SK-N-SH (cell line): ENCODE measurements at regions of chr3 and their contacts with region 1.

Region 1: GRCh38 chr3:132034486-132035464 is at the start of gene CPNE4:
- DNase-seq: peak; percentile 93
- H3K4me3 ChIP-seq: peak within 1 kb of the TSS; percentile 45 to 64
- H3K27ac ChIP-seq: no peak within 1 kb of the TSS
- H3K4me1 ChIP-seq: peaks cover 0 to 8% of the 10 kb centered on the region in 2 experiments; a peak in 1 of 4 replicates
- H3K27me3 ChIP-seq: no peaks in the 10 kb centered on the region; the same call in 1 of the 2 replicates
- CTCF ChIP-seq: peak; percentile 82
- EP300 ChIP-seq: no peak
- RAD21 ChIP-seq: peak; percentile 69
- polyA plus RNA-seq, gene CPNE4: not detected in 2 replicates

Region 2: GRCh38 chr3:131033480-131034080 is 1001.2 kb before region 1 on chr3:
- CTCF ChIA-PET with region 1: interaction called, 22 read pairs
- POLR2A ChIA-PET with region 1: no interaction called
- DNase-seq: peak; percentile 51
- H3K4me3 ChIP-seq: peak overlapping the region in 1 of 2 experiments; percentile 6; a peak in 1 of 4 replicates
- H3K27ac ChIP-seq: no peak overlapping the region
- H3K4me1 ChIP-seq: no peaks in the 10 kb centered on the region
- H3K27me3 ChIP-seq: no peaks in the 10 kb centered on the region
- CTCF ChIP-seq: peak; percentile 85
- EP300 ChIP-seq: no peak
- RAD21 ChIP-seq: peak; percentile 83

Region 3: GRCh38 chr3:131794766-131795388 is 239.9 kb before region 1 on chr3:
- CTCF ChIA-PET with region 1: interaction called, 131 read pairs
- POLR2A ChIA-PET with region 1: no interaction called
- DNase-seq: peak; percentile 40
- H3K4me3 ChIP-seq: no peak overlapping the region; a peak in 1 of 4 replicates
- H3K27ac ChIP-seq: no peak overlapping the region
- H3K4me1 ChIP-seq: peaks cover 0 to 15% of the 10 kb centered on the region in 2 experiments; a peak in 1 of 4 replicates
- H3K27me3 ChIP-seq: no peaks in the 10 kb centered on the region
- CTCF ChIP-seq: peak; percentile 77
- EP300 ChIP-seq: no peak
- RAD21 ChIP-seq: peak; percentile 90

Region 4: GRCh38 chr3:132047209-132047608 is 12.4 kb after region 1 on chr3:
- CTCF ChIA-PET with region 1: interaction called, 11 read pairs
- POLR2A ChIA-PET with region 1: no interaction called
- DNase-seq: no peak
- H3K4me3 ChIP-seq: no peak overlapping the region
- H3K27ac ChIP-seq: no peak overlapping the region
- H3K4me1 ChIP-seq: no peaks in the 10 kb centered on the region
- H3K27me3 ChIP-seq: no peaks in the 10 kb centered on the region
- CTCF ChIP-seq: no peak
- EP300 ChIP-seq: no peak
- RAD21 ChIP-seq: no peak

Region 5: DNA sequence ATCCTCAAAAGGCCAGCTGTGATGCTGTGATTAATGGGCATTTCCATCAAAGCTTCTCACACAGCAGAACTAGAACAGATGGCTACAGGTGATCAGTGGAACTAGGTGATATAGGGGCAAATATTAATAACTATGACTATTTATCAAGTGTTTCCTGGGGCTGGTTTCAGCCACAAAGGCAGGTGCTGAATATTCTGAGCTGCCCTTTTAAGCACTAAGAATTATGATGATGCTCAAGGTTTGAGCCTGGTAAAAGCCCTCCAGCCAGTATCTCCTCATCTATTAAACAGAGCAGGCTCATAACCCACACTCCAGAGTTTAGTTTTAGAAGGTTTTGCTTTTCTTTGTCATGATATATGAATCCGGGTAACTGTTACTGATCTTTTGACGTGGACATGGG is 153.0 kb after region 1 on chr3:
- CTCF ChIA-PET with region 1: interaction called, 102 read pairs
- POLR2A ChIA-PET with region 1: no interaction called
- DNase-seq: no peak
- H3K4me3 ChIP-seq: no peak overlapping the region
- H3K27ac ChIP-seq: no peak overlapping the region
- H3K4me1 ChIP-seq: peaks cover 0 to 4% of the 10 kb centered on the region in 2 experiments; a peak in 1 of 4 replicates
- H3K27me3 ChIP-seq: no peaks in the 10 kb centered on the region
- CTCF ChIP-seq: no peak
- EP300 ChIP-seq: no peak
- RAD21 ChIP-seq: no peak

Region 6: DNA sequence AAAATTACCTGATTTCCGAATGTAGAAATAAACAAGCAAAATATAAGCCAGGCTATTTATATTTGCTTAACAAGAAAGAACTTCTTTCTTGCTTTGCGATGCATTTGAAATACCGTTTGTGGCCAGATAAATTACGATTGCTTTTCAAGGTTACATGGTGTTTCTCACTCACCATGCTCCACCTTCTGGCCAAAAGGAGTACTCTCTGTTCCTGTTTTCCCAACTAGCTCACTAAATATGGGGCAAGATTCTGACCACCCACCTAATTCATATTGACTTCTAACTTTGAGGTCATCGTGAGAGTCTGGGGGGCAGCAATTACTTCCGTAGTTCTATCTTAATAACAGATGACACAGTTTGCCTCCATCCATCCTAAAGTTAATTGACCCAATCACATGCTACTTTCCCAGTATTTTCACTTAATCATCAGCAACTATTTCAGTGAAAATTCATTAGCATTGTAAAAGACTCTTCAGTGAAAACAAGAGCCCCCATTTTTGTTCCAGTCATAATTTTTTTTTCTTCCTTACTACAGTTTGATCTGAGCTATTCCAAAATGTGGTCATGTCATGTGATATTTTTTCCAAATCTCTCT is 308.3 kb after region 1 on chr3:
- CTCF ChIA-PET with region 1: interaction called, 60 read pairs
- POLR2A ChIA-PET with region 1: no interaction called
- DNase-seq: peak; percentile 41
- H3K4me3 ChIP-seq: peak overlapping the region in 1 of 2 experiments; percentile 25; a peak in 1 of 4 replicates
- H3K27ac ChIP-seq: no peak overlapping the region
- H3K4me1 ChIP-seq: no peaks in the 10 kb centered on the region
- H3K27me3 ChIP-seq: peaks cover 6% of the 10 kb centered on the region; the same call in 1 of the 2 replicates
- CTCF ChIP-seq: peak; percentile 82
- EP300 ChIP-seq: no peak
- RAD21 ChIP-seq: peak; percentile 77

Region 7: GRCh38 chr3:132822266-132822665 is 787.5 kb after region 1 on chr3:
- CTCF ChIA-PET with region 1: no interaction called
- POLR2A ChIA-PET with region 1: no interaction called
- DNase-seq: no peak
- H3K4me3 ChIP-seq: no peak overlapping the region
- H3K27ac ChIP-seq: no peak overlapping the region
- H3K4me1 ChIP-seq: no peaks in the 10 kb centered on the region
- H3K27me3 ChIP-seq: no peaks in the 10 kb centered on the region; the same call in 1 of the 2 replicates
- CTCF ChIP-seq: no peak
- EP300 ChIP-seq: no peak
- RAD21 ChIP-seq: no peak